Natural killer cell (primary cell): ENCODE measurements at regions of chr19 and their contacts with region 1.

Region 1: DNA sequence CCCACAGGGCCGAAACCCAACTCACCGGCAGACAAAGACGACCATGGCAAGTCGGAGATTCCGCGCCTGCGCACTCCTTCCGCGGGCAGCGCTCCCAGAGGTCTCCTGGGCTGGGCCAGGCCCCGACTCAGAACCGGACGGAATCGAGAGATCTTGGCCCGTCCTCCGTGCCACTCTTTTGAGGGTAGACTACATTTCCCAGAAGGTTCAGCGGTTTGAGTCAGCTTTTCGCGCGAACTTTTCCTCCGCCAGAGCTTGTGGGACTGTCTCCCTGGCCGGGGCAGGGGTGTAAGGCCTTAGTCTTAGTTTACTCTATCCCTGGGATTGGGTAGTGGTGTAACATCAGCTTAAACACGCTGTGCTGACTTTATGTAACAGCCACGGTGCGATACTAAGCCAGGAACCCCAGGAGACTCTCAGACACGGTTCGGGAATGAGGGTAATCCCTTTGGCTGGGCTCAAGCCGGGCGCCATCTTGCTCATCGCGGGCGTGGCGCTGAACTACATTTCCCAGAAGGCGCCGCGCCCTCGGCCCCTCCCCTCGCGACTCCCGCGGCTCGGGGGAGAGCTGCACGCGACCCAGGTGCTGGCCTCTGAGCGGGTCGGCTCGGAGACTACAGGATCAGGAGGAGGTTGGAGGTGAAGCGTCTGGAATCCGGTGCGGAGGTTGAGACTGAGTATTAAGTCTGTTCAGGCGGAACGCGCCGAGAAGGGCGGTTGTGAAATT is at the start of gene ZNF260:
- DNase-seq: peak; percentile 90 to 94
- ATAC-seq: peak; percentile 77 to 92 (median 84)
- H3K4me3 ChIP-seq: peak within 1 kb of the TSS; percentile 76
- H3K4me3 Mint-ChIP-seq: peak within 1 kb of the TSS; percentile 97
- H3K27ac ChIP-seq: peak within 1 kb of the TSS; percentile 93
- H3K27ac Mint-ChIP-seq: peak within 1 kb of the TSS; percentile 94 to 99
- H3K4me1 ChIP-seq: peaks cover 17% of the 10 kb centered on the region
- H3K4me1 Mint-ChIP-seq: peaks cover 27 to 30% of the 10 kb centered on the region in 2 donors
- H3K27me3 ChIP-seq: no peaks in the 10 kb centered on the region
- H3K27me3 Mint-ChIP-seq: no peaks in the 10 kb centered on the region
- CTCF ChIP-seq: no peak
- total RNA-seq, gene ZNF260: 8.0 to 9.4 (median 8.4) TPM

Region 2: DNA sequence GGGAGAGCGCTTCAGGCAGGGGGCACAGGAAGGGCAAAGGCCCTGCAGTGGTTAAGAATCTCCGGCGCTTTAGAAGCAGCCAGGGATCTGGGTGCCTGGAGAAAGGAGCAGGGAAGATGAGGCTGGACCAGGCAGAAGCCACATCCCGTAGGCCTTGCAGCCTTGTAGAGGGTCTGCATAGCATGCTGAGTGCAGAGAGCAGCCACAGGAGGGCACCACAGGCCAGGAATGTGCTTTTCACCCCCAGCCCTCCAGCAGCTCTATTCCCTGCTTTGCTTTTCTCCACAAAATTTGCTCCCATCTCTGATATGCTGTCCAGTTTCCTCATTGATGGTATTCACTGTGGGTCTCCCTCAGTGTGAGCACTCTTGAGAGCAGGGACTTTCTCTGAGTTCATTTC is 467.9 kb before region 1 on chr19:
- intact Hi-C with region 1: no loop called
- DNase-seq: peak in 1 of 2 donors; percentile 48
- ATAC-seq: peak in 1 of 3 donors; percentile 46
- H3K4me3 ChIP-seq: no peak overlapping the region
- H3K4me3 Mint-ChIP-seq: no peak overlapping the region
- H3K27ac ChIP-seq: no peak overlapping the region
- H3K27ac Mint-ChIP-seq: no peak overlapping the region
- H3K4me1 ChIP-seq: peaks cover 2% of the 10 kb centered on the region
- H3K4me1 Mint-ChIP-seq: peaks cover 3 to 7% of the 10 kb centered on the region in 2 donors
- H3K27me3 ChIP-seq: no peaks in the 10 kb centered on the region
- H3K27me3 Mint-ChIP-seq: no peaks in the 10 kb centered on the region
- CTCF ChIP-seq: no peak

Region 3: GRCh38 chr19:36214386-36215275 is 313.7 kb before region 1 on chr19 and contains the starts of genes ZNF146 and ZNF565:
- intact Hi-C with region 1: loop called (anchors 1 kb)
- DNase-seq: peak; percentile 90 to 97
- ATAC-seq: peak; percentile 81 to 95 (median 86)
- H3K4me3 ChIP-seq: peak within 1 kb of the TSS; percentile 92
- H3K4me3 Mint-ChIP-seq: no peak within 1 kb of the TSS
- H3K27ac ChIP-seq: peak within 1 kb of the TSS; percentile 91
- H3K27ac Mint-ChIP-seq: no peak within 1 kb of the TSS
- H3K4me1 ChIP-seq: peaks cover 18% of the 10 kb centered on the region
- H3K4me1 Mint-ChIP-seq: peaks cover 12 to 14% of the 10 kb centered on the region in 2 donors
- H3K27me3 ChIP-seq: no peaks in the 10 kb centered on the region
- H3K27me3 Mint-ChIP-seq: no peaks in the 10 kb centered on the region
- CTCF ChIP-seq: no peak
- total RNA-seq, gene ZNF146: 20.3 to 37.3 (median 21.5) TPM
- total RNA-seq, gene ZNF565: 7.7 to 19.1 (median 10.5) TPM

Region 4: DNA sequence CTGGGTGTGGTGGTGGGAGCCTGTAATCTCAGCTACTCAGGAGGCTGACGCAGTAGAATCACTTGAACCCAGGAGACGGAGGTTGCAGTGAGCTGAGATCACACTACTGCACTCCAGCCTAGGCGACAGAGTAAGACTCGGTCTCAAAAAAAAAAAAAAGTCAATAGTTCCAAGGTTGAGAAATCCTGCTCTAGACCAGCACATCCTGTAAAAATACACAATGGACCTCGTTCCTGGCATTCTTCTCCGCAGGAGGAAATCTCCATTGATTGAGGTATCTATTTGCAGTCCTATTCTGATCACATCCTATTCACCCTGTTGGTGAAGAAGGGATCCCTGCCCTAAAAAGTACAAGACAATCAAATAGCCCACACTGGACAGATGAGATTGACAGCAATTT is 164.5 kb before region 1 on chr19:
- intact Hi-C with region 1: no loop called
- DNase-seq: no peak
- ATAC-seq: no peak
- H3K4me3 ChIP-seq: no peak overlapping the region
- H3K4me3 Mint-ChIP-seq: no peak overlapping the region
- H3K27ac ChIP-seq: no peak overlapping the region
- H3K27ac Mint-ChIP-seq: no peak overlapping the region
- H3K4me1 ChIP-seq: no peaks in the 10 kb centered on the region
- H3K4me1 Mint-ChIP-seq: no peaks in the 10 kb centered on the region
- H3K27me3 ChIP-seq: no peaks in the 10 kb centered on the region
- H3K27me3 Mint-ChIP-seq: no peaks in the 10 kb centered on the region
- CTCF ChIP-seq: no peak

Region 5: DNA sequence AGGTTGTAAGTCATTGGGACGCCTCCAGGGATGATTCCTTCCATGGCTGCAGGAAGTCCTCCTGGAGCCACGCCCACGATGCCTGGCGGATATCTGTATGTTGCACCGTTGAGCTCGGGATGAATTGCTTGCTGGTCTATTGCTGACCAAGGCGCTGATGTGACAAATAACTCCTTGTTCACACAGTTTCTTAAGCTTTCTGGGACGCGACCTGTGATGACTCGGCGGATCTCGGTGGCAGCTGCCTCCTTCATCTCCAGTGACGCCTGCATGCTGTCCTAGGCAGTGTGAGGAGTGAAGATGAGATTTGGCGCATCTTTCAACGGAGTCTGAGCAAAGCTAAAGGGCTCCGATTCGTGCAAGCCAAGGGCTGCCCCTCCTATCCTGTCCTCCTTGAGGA is 31.4 kb before region 1 on chr19:
- intact Hi-C with region 1: no loop called
- DNase-seq: no peak
- ATAC-seq: no peak
- H3K4me3 ChIP-seq: no peak overlapping the region
- H3K4me3 Mint-ChIP-seq: no peak overlapping the region
- H3K27ac ChIP-seq: no peak overlapping the region
- H3K27ac Mint-ChIP-seq: no peak overlapping the region
- H3K4me1 ChIP-seq: no peaks in the 10 kb centered on the region
- H3K4me1 Mint-ChIP-seq: no peaks in the 10 kb centered on the region
- H3K27me3 ChIP-seq: no peaks in the 10 kb centered on the region
- H3K27me3 Mint-ChIP-seq: no peaks in the 10 kb centered on the region
- CTCF ChIP-seq: no peak

Region 6: DNA sequence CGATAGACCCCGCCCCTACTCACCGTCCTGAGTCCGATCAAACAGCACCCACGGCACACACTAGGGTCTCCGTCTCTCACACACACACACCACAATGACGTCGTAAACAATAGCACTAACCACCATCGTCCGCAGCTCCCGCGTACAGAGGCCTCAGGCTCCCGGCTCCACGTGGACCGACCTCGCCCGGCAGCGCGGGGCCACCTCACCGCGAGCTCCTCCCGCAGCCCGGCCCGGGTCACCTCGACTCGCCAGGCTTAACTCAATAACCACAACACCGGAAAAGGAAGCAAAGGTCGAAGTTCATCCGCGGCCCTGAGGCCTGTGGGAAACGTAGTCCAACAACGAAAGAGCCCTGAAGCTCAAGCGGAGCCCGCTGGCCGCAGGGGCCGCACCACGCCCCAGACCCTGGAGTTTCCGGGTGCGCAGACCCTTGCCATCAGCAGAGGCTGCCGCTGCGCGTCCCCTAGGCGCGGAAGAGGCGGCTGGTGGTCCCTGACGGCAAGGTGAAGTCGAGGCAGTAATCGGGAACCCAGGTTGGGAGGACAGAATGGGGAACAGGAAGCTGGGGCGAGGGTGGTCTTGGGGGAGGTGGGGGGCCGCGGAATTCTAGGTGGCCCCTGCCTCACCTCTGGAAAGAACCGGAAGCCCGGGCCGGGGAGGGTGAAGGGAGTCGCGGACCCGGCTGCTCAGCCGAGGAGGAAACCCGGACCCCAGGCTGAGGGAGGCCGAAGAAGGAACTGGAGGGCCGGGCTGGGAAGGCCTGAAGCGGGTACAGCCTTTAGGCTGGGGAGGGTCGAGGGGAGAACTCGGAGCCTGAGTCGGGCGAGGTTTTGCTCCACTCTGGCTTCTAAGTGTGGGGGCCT is 44.9 kb after region 1 on chr19 and contains the start of gene ZNF529:
- intact Hi-C with region 1: loop called (anchors 1 kb)
- DNase-seq: peak; percentile 88 to 95
- ATAC-seq: peak; percentile 90 to 97 (median 90)
- H3K4me3 ChIP-seq: peak within 1 kb of the TSS; percentile 83
- H3K4me3 Mint-ChIP-seq: peak within 1 kb of the TSS; percentile 89
- H3K27ac ChIP-seq: peak within 1 kb of the TSS; percentile 86
- H3K27ac Mint-ChIP-seq: peak within 1 kb of the TSS; percentile 91 to 100
- H3K4me1 ChIP-seq: peaks cover 17% of the 10 kb centered on the region
- H3K4me1 Mint-ChIP-seq: peaks cover 36% of the 10 kb centered on the region in 2 donors
- H3K27me3 ChIP-seq: no peaks in the 10 kb centered on the region
- H3K27me3 Mint-ChIP-seq: no peaks in the 10 kb centered on the region
- CTCF ChIP-seq: no peak
- total RNA-seq, gene ZNF529: 23.5 to 36.4 (median 29.2) TPM

Region 7: GRCh38 chr19:36652958-36653357 is 124.6 kb after region 1 on chr19:
- intact Hi-C with region 1: no loop called
- DNase-seq: no peak
- ATAC-seq: no peak
- H3K4me3 ChIP-seq: no peak overlapping the region
- H3K4me3 Mint-ChIP-seq: no peak overlapping the region
- H3K27ac ChIP-seq: no peak overlapping the region
- H3K27ac Mint-ChIP-seq: peak overlapping the region; percentile 20 to 58
- H3K4me1 ChIP-seq: no peaks in the 10 kb centered on the region
- H3K4me1 Mint-ChIP-seq: no peaks in the 10 kb centered on the region
- H3K27me3 ChIP-seq: no peaks in the 10 kb centered on the region
- H3K27me3 Mint-ChIP-seq: no peaks in the 10 kb centered on the region
- CTCF ChIP-seq: no peak

Region 8: GRCh38 chr19:36665832-36666231 is 137.5 kb after region 1 on chr19:
- intact Hi-C with region 1: loop called (anchors 2 kb)
- DNase-seq: peak in 1 of 2 donors; percentile 10
- ATAC-seq: no peak
- H3K4me3 ChIP-seq: peak overlapping the region; percentile 80
- H3K4me3 Mint-ChIP-seq: peak overlapping the region; percentile 100
- H3K27ac ChIP-seq: no peak overlapping the region
- H3K27ac Mint-ChIP-seq: peak overlapping the region; percentile 98
- H3K4me1 ChIP-seq: peaks cover 20% of the 10 kb centered on the region
- H3K4me1 Mint-ChIP-seq: peaks cover 34 to 40% of the 10 kb centered on the region in 2 donors
- H3K27me3 ChIP-seq: no peaks in the 10 kb centered on the region
- H3K27me3 Mint-ChIP-seq: no peaks in the 10 kb centered on the region
- CTCF ChIP-seq: no peak

Region 9: GRCh38 chr19:36837906-36838783 is 309.8 kb after region 1 on chr19 and contains the start of gene ZNF790:
- intact Hi-C with region 1: loop called (anchors 2 kb)
- DNase-seq: peak; percentile 83 to 91
- ATAC-seq: peak; percentile 91 to 97 (median 94)
- H3K4me3 ChIP-seq: peak within 1 kb of the TSS; percentile 80
- H3K4me3 Mint-ChIP-seq: no peak within 1 kb of the TSS
- H3K27ac ChIP-seq: peak within 1 kb of the TSS; percentile 94
- H3K27ac Mint-ChIP-seq: no peak within 1 kb of the TSS
- H3K4me1 ChIP-seq: peaks cover 14% of the 10 kb centered on the region
- H3K4me1 Mint-ChIP-seq: peaks cover 0 to 6% of the 10 kb centered on the region in 2 donors
- H3K27me3 ChIP-seq: no peaks in the 10 kb centered on the region
- H3K27me3 Mint-ChIP-seq: no peaks in the 10 kb centered on the region
- CTCF ChIP-seq: no peak
- total RNA-seq, gene ZNF790: 2.6 to 6.8 (median 5.0) TPM

Region 10: DNA sequence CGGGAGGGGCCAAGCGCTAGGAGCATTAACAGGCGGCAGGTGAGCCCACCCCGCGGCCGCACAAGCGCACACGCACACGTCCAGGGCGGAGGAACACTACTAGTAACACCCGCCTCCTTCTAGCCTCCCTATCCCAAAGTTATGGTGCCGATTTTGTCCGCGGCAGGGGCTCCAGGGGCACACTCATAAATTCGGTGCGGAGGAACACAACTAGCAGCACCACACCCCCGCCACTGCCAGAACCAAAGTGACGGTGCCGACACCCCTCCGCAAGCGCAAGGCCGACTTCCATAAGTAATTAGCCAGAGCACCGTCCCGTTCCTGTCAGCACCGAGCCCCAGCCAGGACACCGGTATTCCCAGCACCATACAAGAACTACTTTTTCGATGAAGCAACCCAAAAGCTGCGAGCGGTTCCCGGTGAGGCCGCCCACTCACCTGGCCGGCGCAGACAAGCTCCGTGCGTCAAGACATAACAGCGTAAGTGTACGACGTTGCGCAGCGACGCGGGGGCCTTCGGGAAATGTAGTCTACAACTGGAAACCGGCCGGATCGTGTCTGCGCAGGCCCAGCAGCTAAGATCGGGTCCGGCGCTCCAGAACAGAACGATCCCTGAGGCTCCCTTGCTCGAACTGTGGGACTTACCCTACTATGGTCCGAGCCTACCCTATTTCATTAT is 1066.1 kb after region 1 on chr19 and contains the starts of genes ZNF540 and ZNF571:
- intact Hi-C with region 1: loop called (anchors 1 kb)
- DNase-seq: peak; percentile 83 to 95
- ATAC-seq: peak; percentile 86 to 96 (median 92)
- H3K4me3 ChIP-seq: peak within 1 kb of the TSS; percentile 74
- H3K4me3 Mint-ChIP-seq: peak within 1 kb of the TSS; percentile 99
- H3K27ac ChIP-seq: peak within 1 kb of the TSS; percentile 97
- H3K27ac Mint-ChIP-seq: peak within 1 kb of the TSS; percentile 97 to 99
- H3K4me1 ChIP-seq: peaks cover 15% of the 10 kb centered on the region
- H3K4me1 Mint-ChIP-seq: peaks cover 26 to 31% of the 10 kb centered on the region in 2 donors
- H3K27me3 ChIP-seq: no peaks in the 10 kb centered on the region
- H3K27me3 Mint-ChIP-seq: no peaks in the 10 kb centered on the region
- CTCF ChIP-seq: no peak
- total RNA-seq, gene ZNF540: 6.4 to 7.5 (median 7.0) TPM
- total RNA-seq, gene ZNF571: 11.7 to 22.1 (median 19.6) TPM